ENCODE measurements at regions of chr6 and their contacts with region 1.

Region 1: GRCh38 chr6:122839477-122839876 is 50.4 kb downstream of the SMPDL3A start:
- DNase-seq: peak in 1 of 2 donors; percentile 66
- H3K4me3 ChIP-seq: no peak overlapping the region
- H3K27ac ChIP-seq: no peak overlapping the region
- H3K4me1 ChIP-seq: no peaks in the 10 kb centered on the region
- H3K27me3 ChIP-seq: no peaks in the 10 kb centered on the region
- CTCF ChIP-seq: peak; percentile 38 to 62 (median 58)

Region 2: GRCh38 chr6:122730775-122731386 is 108.6 kb before region 1 on chr6:
- intact Hi-C with region 1: loop called (anchors 2 kb)
- DNase-seq: no peak
- H3K4me3 ChIP-seq: no peak overlapping the region
- H3K27ac ChIP-seq: no peak overlapping the region
- H3K4me1 ChIP-seq: no peaks in the 10 kb centered on the region
- H3K27me3 ChIP-seq: no peaks in the 10 kb centered on the region
- CTCF ChIP-seq: peak; percentile 30 to 77 (median 57)

Region 3: DNA sequence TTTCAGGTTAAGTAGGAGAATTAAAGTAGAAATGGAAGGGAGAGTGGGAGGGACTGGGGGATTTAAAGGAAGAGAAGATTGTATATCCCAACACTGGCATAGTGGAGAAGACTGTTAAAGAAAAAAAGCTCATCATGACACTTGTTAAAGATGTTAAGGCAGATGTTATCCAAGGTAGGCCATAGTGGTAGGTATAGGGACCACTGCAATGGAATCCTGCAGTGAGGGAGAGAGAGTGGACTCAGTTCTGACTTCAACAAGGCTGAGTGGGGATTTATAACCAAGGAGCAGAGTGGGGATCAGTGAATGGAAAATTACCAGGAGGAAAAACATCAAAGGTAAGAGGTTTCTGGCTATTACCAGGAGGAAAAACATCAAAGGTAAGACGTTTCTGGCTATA is 29.3 kb before region 1 on chr6:
- intact Hi-C with region 1: loop called (anchors 2 kb)
- DNase-seq: no peak
- H3K4me3 ChIP-seq: no peak overlapping the region
- H3K27ac ChIP-seq: no peak overlapping the region
- H3K4me1 ChIP-seq: no peaks in the 10 kb centered on the region
- H3K27me3 ChIP-seq: no peaks in the 10 kb centered on the region
- CTCF ChIP-seq: no peak

Measured in ascending aorta (tissue), 2 donors.